ENCODE measurements at regions of chr18 and their contacts with region 1.

Region 1: GRCh38 chr18:78984941-78985784 is 5.5 kb downstream of the SALL3 start:
- DNase-seq: no peak
- ATAC-seq: no peak

Region 2: GRCh38 chr18:78041218-78041617 is 943.9 kb before region 1 on chr18:
- intact Hi-C with region 1: no loop called
- DNase-seq: no peak
- ATAC-seq: no peak

Region 3: GRCh38 chr18:78073275-78073674 is 911.9 kb before region 1 on chr18:
- intact Hi-C with region 1: loop called (anchors 10 kb)
- DNase-seq: no peak
- ATAC-seq: no peak

Measured in sciatic nerve (tissue), 2 donors.